MCF 10A (cell line): ENCODE measurements at regions of chr7 and their contacts with region 1.

Region 1: GRCh38 chr7:151057989-151058780 is 488 bp upstream of the CDK5 start:
- DNase-seq: peak; percentile 99
- H3K4me3 Mint-ChIP-seq: peak overlapping the region; percentile 97
- H3K27ac Mint-ChIP-seq: peak overlapping the region; percentile 87
- H3K4me1 Mint-ChIP-seq: peaks cover 34% of the 10 kb centered on the region
- H3K27me3 Mint-ChIP-seq: no peaks in the 10 kb centered on the region
- CTCF ChIP-seq: no peak

Region 2: DNA sequence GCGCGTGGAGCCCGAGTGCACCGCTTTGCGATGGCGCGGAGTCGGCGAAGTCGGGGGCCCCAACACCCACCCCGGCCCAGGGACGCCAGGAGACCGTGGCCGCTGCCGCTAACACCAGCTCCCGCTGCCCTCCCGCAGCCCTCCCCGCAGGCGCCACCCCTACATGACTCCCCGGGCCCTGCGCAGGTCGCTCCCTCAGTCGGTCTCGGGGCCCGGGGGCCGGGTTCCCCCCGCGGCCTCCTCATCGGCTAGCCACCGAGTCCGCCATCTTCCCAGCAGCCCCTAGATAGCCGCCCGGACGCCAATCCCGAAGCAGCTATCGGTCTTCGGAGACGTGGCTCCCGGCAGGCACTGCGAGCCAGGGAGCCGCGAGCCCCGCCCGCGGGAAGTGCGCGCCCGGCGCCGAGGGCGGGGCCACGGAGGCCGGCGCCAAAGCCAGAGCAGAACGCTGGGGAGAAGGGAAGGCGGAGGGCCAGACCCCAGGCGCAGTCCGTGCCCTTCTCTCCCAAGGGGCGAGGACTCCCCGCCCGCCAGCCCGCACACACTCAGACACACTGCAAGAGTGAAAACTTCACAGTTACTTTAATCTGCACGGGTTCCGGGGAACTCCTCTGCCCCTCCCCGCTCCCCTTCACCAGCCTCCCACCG is 22.5 kb after region 1 on chr7 and contains the start of gene FASTK:
- CTCF ChIA-PET with region 1: interaction called, 11 read pairs
- POLR2A ChIA-PET with region 1: interaction called, 151 read pairs
- intact Hi-C with region 1: loop called (anchors 1 kb)
- DNase-seq: peak; percentile 91
- H3K4me3 Mint-ChIP-seq: peak within 1 kb of the TSS; percentile 91
- H3K27ac Mint-ChIP-seq: peak within 1 kb of the TSS; percentile 83
- H3K4me1 Mint-ChIP-seq: peaks cover 32% of the 10 kb centered on the region
- H3K27me3 Mint-ChIP-seq: no peaks in the 10 kb centered on the region
- CTCF ChIP-seq: no peak
- total RNA-seq, gene FASTK: 79.3 and 83.6 TPM in 2 replicates

Region 3: DNA sequence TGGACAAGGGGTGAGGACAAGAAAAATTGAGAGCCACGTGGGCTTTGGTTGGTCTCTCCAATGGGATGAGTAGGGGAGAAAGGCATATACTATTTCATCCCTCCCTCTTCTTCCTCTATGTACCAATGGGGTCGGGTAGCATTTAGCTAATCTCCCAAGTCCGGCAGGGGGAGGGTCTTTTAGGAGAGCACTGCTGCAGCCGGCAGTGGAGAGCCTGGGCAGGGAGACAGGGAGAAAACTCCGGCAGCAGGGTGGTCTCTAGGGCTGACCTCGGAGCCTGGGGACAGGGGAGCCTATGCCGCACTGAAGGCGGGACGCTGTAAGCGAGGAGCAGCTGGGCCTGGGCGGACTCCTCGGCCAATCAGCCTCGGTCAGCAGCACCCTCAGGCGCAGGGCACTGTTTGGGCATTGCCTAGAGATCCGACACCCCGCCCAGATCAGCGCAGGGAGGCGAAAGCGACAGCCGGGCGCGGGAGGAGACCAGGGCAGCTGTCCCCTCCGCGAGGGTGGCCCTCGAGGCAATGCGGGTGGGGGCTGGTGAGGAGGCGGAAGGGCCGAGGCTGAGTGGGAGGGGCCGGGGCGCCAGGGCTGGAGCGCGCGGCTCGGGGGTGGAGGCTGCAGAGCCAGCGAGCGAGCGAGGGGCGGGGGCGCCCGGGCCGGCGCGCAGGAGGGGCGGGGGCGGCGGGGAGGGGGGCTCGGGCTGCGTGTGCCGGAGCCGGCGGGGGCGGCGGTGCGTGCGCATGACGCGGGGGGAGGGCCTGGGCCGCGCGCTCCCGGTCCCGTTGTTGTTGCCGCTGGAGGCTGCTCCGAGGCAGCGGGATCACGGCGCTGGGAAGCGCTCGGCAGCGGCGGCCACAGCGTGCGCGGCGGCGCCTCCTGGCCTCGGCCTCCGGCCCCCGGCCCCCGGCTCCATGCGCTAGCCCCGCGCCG is 27.8 kb after region 1 on chr7 and contains the start of gene AGAP3:
- CTCF ChIA-PET with region 1: interaction called, 11 read pairs
- POLR2A ChIA-PET with region 1: interaction called, 151 read pairs
- intact Hi-C with region 1: loop called (anchors 1 kb)
- DNase-seq: peak; percentile 73
- H3K4me3 Mint-ChIP-seq: peak within 1 kb of the TSS; percentile 77
- H3K27ac Mint-ChIP-seq: peak within 1 kb of the TSS; percentile 44
- H3K4me1 Mint-ChIP-seq: peaks cover 34% of the 10 kb centered on the region
- H3K27me3 Mint-ChIP-seq: no peaks in the 10 kb centered on the region
- CTCF ChIP-seq: no peak
- total RNA-seq, gene AGAP3: 95.6 and 138 TPM in 2 replicates